ENCODE measurements at regions of chr3 and their contacts with region 1.

Region 1: GRCh38 chr3:136919799-136920580 is 37.8 kb upstream of the IL20RB start:
- DNase-seq: no peak
- ATAC-seq: peak in 1 of 2 donors; percentile 63
- H3K4me3 ChIP-seq: no peak overlapping the region
- H3K27ac ChIP-seq: peak overlapping the region in 3 of 4 donors; percentile 45 to 59 (median 54)
- H3K4me1 ChIP-seq: peaks cover 35 to 44% of the 10 kb centered on the region in 2 donors
- H3K27me3 ChIP-seq: no peaks in the 10 kb centered on the region
- CTCF ChIP-seq: no peak
- POLR2A ChIP-seq: no peak

Region 2: DNA sequence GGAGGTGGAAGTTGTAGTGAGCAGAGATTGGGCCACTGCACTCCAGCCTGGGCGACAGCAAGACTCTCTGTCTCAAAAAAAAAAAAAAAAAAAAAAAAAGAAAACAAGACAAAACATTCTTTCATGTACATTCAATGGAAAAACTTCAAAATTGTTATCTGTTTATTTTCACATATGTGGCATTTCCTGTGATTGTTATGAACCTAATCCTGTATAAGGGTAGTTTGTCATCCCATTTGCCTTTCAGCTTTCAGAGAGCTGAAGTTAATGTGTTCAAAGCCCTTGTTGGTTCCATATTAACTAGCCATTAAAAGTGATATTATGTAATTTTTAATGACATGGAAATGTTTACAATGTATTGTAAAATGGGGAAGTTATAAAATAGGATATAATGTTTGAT is 75.3 kb before region 1 on chr3:
- in situ Hi-C with region 1: loop called in 1 of 4 experiments (anchors 5 kb)
- intact Hi-C with region 1: no loop called
- DNase-seq: no peak
- ATAC-seq: no peak
- H3K4me3 ChIP-seq: no peak overlapping the region
- H3K27ac ChIP-seq: no peak overlapping the region
- H3K4me1 ChIP-seq: peaks cover 0 to 4% of the 10 kb centered on the region in 2 donors
- H3K27me3 ChIP-seq: no peaks in the 10 kb centered on the region
- CTCF ChIP-seq: no peak
- POLR2A ChIP-seq: no peak

Measured in gastrocnemius medialis (tissue), 4 donors.